ENCODE measurements at regions of chr5 and their contacts with region 1.

Region 1: DNA sequence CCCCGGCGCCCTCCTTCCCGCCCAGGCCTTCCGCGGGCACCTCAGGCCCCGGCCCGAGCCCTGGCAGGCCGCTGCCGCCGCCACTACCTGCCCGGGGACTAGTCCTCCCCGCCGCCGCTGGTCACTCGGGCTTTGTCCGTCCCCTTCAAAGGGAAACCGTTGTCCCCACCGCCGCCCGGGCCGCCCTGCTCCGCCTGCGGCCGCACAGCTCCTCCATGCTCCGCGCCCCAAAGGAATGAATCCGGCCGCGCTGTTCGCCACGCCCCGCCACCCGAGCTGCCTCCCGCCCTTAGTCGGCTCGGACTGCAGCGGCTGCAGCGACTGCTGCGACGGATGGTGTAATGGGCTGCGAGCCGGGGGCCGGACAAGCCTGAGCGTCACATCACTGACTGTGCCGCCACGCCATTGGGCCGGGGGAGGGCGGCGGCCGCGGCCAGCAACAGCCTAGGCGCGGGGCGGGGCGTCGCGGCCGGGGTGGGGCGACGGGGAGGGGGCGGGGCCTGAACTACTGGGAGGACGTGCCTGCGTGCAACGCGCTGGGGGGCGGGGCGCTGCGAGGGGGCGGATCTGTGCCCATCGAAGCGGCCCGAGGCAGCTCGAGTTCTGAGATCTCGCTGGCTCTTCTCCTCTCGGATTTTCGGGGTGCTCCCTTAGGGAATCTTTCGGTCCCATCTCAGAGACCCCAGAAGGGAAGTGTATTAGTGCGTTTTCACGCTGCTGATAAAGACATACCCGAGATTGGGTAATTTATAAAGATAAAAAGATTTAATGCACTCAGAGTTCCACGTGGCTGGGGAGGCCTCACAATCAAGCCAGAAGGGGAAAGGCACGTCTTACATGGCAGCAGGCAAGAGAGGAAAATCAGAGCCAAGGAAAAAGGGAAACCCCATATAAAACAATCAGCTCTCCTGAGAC is at the start of gene FEM1C:
- DNase-seq: peak; percentile 96
- H3K4me3 ChIP-seq: peak within 1 kb of the TSS; percentile 92
- H3K27ac ChIP-seq: peak within 1 kb of the TSS; percentile 79
- H3K4me1 ChIP-seq: peaks cover 29% of the 10 kb centered on the region
- CTCF ChIP-seq: no peak
- total RNA-seq, gene FEM1C: 4.6 and 5.6 TPM in 2 replicates

Region 2: GRCh38 chr5:115532517-115532916 is 12.2 kb before region 1 on chr5:
- CTCF ChIA-PET with region 1: no interaction called
- POLR2A ChIA-PET with region 1: interaction called, 10 read pairs
- intact Hi-C with region 1: no loop called
- DNase-seq: no peak
- H3K4me3 ChIP-seq: no peak overlapping the region
- H3K27ac ChIP-seq: no peak overlapping the region
- H3K4me1 ChIP-seq: peaks cover 6% of the 10 kb centered on the region
- CTCF ChIP-seq: no peak

Region 3: DNA sequence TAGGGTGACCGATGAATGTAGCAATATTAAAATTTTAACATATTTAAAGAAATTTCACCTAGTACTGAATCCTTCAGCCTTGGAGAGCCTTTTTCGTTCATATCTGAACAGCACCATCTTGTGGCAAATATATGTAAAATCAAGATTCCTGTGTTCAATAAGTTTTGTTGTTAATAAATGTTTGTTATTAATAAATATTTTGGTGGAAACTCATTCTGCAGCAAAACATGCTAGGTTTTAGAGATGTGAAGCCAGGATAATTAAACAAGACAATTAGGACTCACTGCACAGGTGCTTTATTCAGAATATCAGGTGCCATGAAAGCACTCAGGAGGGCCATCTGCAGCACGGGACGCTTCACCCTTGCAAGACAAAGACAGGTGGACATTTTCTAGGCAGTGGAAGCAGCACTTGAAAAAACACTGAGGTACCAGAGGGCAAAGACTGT is 41.9 kb after region 1 on chr5:
- CTCF ChIA-PET with region 1: no interaction called
- POLR2A ChIA-PET with region 1: interaction called, 3 read pairs
- intact Hi-C with region 1: loop called (anchors 5 kb)
- DNase-seq: peak; percentile 44
- H3K4me3 ChIP-seq: no peak overlapping the region
- H3K27ac ChIP-seq: no peak overlapping the region
- H3K4me1 ChIP-seq: no peaks in the 10 kb centered on the region
- CTCF ChIP-seq: peak; percentile 85

Region 4: DNA sequence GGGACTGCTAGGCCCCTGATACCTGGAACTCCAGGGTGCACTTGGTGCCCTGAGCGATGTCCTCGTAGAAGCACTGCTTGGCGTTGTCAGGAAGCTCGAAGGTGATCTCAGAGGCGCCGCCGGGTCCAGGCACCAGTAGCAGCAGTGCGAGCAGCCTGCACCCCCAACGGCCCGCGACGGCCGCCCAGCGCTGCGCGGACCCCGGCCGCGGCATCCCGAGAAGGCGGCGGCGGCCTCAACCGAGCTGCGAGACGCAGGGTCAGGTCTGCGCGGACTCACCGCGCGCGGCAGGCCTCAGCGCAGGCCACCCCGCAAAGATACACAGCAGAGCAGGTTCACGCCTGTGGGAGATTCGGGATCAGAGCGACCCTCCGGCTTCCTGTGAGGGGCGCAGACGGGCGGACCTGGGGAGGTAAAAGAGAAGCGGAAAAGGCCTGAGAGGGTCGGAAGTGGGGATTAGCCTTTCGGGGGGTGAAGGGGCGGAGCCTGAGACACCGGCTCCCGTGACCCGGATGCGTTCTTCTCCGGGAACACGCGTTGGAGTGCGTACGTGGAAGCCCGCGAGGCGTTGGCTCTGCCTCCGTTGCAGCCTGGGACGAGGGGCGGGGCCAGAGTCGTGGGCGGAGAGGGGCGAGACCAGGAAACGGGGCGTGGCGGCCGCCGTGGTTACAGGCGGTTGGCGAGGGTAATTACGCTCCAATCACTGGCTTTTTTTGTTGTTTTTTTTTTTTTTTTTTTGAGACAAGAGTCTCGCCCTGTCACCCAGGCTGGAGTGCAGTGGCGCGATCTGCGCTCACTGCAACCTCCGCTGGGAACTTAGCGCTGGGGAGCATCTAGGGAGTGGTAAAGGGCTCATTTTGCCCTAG is 81.1 kb after region 1 on chr5 and contains the start of gene TMED7:
- CTCF ChIA-PET with region 1: interaction called, 3 read pairs
- POLR2A ChIA-PET with region 1: interaction called, 4 read pairs
- intact Hi-C with region 1: loop called (anchors 1 kb)
- DNase-seq: peak; percentile 98
- H3K4me3 ChIP-seq: peak within 1 kb of the TSS; percentile 94
- H3K27ac ChIP-seq: peak within 1 kb of the TSS; percentile 70
- H3K4me1 ChIP-seq: peaks cover 39% of the 10 kb centered on the region
- CTCF ChIP-seq: 0 out of 2 replicates have a peak, but pooled peaks have one; percentile 17
- total RNA-seq, gene TMED7: 50.9 and 55.1 TPM in 2 replicates

Region 5: DNA sequence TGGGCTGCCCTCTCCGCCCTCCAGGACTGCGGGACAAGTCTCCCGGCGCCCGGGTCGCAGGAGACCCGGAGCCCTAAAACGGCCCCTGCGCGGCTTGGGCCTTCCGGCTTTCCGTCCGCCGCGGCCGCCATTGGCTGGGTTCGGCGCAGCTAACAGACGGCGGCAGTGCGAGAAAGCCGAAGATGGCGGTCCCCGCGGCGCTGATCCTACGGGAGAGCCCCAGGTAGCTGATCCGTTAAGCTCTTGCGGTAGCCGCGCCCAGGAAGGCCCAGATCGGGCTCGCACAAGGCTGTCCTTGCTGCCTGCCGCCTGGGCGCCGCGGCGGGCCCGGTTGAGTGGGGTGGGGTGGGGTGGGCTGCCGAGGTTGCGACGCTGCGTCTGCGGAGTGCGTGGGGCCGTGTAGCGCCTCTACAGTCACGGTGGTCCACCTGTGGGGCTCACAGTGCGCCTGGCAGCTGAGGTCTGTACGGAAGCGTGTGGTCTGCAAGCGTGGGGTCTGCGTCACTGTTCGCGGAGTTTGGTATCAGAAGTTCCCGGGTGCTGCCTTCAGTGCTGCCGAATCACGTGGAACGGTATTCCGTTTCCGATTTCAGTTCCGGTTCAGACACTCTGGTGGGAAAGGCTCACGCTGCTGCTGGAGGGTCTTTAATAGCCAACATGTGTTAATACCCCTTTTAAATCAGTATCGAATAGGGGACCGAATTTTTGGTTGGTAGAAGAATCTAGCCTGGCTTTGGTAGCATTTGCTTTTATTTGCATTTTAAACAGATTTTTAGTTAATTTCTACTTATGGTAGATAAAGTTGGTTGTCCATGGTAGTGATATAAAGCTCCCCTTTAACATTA is 540.4 kb after region 1 on chr5 and contains the start of gene COMMD10:
- CTCF ChIA-PET with region 1: no interaction called
- POLR2A ChIA-PET with region 1: no interaction called
- intact Hi-C with region 1: loop called (anchors 5 kb)
- DNase-seq: peak; percentile 76
- H3K4me3 ChIP-seq: peak within 1 kb of the TSS; percentile 76
- H3K27ac ChIP-seq: no peak within 1 kb of the TSS
- H3K4me1 ChIP-seq: peaks cover 8% of the 10 kb centered on the region
- CTCF ChIP-seq: no peak
- total RNA-seq, gene COMMD10: 11.0 and 15.7 TPM in 2 replicates